ENCODE measurements at regions of chr2 and their contacts with region 1.

Region 1: GRCh38 chr2:230202430-230203109 is 17.2 kb downstream of the SP110 start:
- DNase-seq: peak; percentile 39
- ATAC-seq: peak; percentile 70
- H3K4me3 Mint-ChIP-seq: peak overlapping the region; percentile 76
- H3K27ac Mint-ChIP-seq: peak overlapping the region; percentile 87
- H3K4me1 Mint-ChIP-seq: peaks cover 42% of the 10 kb centered on the region
- H3K27me3 Mint-ChIP-seq: no peaks in the 10 kb centered on the region
- CTCF ChIP-seq: no peak

Region 2: DNA sequence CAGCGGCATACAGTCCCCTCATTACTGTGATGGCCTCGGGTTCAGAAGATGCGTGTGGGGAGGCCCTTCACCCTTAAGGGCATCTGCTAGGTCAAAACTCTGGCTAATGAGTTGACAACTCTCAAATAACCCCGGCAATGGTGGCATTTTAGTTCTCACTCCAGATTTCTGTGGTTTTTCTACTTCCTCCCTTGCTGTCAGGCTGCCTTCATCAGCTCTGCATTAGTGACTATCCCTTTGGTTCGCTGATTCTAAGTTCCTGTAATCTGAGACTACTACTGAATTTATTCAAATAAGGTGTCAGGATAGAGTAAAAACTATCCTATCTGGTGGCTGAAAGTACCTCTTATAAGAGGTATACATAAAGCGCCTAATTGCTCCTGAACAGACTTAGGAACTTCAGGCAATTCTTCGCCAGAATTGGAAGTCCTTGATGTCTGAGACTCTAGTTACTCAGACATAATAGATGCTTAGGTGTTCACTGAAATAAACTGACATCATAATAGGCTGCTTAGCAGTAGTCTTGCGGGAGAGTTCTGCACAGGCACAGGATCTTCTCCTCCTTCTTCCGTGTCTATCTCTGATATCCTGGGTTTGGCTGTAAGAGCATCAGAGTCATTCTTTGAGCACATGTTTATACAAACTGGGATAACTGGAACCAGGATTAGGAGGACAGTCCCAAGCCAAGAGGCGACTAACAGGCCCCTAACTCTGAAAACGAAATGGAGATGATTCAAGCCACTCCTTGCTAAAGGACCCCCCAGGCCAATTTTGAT is 682.7 kb before region 1 on chr2:
- CTCF ChIA-PET with region 1: no interaction called
- POLR2A ChIA-PET with region 1: no interaction called
- intact Hi-C with region 1: no loop called
- DNase-seq: no peak
- ATAC-seq: no peak
- H3K4me3 Mint-ChIP-seq: no peak overlapping the region
- H3K27ac Mint-ChIP-seq: no peak overlapping the region
- H3K4me1 Mint-ChIP-seq: no peaks in the 10 kb centered on the region
- H3K27me3 Mint-ChIP-seq: no peaks in the 10 kb centered on the region
- CTCF ChIP-seq: no peak

Region 3: GRCh38 chr2:230018153-230018552 is 184.4 kb before region 1 on chr2:
- CTCF ChIA-PET with region 1: no interaction called
- POLR2A ChIA-PET with region 1: no interaction called
- intact Hi-C with region 1: no loop called
- DNase-seq: no peak
- ATAC-seq: no peak
- H3K4me3 Mint-ChIP-seq: no peak overlapping the region
- H3K27ac Mint-ChIP-seq: no peak overlapping the region
- H3K4me1 Mint-ChIP-seq: no peaks in the 10 kb centered on the region
- H3K27me3 Mint-ChIP-seq: no peaks in the 10 kb centered on the region
- CTCF ChIP-seq: no peak

Region 4: GRCh38 chr2:230219419-230220331 is 17.1 kb after region 1 on chr2 and contains the start of gene SP110:
- CTCF ChIA-PET with region 1: interaction called, 17 read pairs
- POLR2A ChIA-PET with region 1: interaction called, 268 read pairs
- intact Hi-C with region 1: loop called (anchors 1 kb)
- DNase-seq: peak; percentile 61
- ATAC-seq: peak; percentile 73
- H3K4me3 Mint-ChIP-seq: peak within 1 kb of the TSS; percentile 96
- H3K27ac Mint-ChIP-seq: peak within 1 kb of the TSS; percentile 97
- H3K4me1 Mint-ChIP-seq: peaks cover 90% of the 10 kb centered on the region
- H3K27me3 Mint-ChIP-seq: no peaks in the 10 kb centered on the region
- CTCF ChIP-seq: no peak
- total RNA-seq, gene SP110: 139 and 147 TPM in 2 replicates

Region 5: DNA sequence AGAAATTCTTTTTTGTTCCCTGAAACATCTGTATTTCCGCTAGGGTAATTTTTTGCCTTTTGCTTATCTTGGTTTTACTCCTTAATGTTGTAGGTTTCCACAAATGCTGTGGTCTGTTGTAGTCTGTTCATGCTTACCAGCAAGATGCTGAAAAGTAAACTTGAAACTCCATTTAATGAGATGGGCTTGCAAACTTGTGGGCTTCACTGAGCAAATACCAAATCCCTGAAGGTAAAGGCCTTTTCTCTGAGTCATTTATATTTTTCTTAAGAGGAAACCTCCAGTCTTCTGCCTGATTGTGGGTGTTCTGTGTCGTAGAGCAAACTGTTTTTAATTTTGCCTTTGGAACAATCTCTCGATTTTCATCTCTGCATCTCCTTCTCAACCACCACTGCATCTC is 32.3 kb after region 1 on chr2:
- CTCF ChIA-PET with region 1: interaction called, 10 read pairs
- POLR2A ChIA-PET with region 1: interaction called, 268 read pairs
- intact Hi-C with region 1: loop called (anchors 1 kb)
- DNase-seq: no peak
- ATAC-seq: peak; percentile 56
- H3K4me3 Mint-ChIP-seq: peak overlapping the region; percentile 66
- H3K27ac Mint-ChIP-seq: peak overlapping the region; percentile 84
- H3K4me1 Mint-ChIP-seq: peaks cover 64% of the 10 kb centered on the region
- H3K27me3 Mint-ChIP-seq: no peaks in the 10 kb centered on the region
- CTCF ChIP-seq: no peak

Region 6: DNA sequence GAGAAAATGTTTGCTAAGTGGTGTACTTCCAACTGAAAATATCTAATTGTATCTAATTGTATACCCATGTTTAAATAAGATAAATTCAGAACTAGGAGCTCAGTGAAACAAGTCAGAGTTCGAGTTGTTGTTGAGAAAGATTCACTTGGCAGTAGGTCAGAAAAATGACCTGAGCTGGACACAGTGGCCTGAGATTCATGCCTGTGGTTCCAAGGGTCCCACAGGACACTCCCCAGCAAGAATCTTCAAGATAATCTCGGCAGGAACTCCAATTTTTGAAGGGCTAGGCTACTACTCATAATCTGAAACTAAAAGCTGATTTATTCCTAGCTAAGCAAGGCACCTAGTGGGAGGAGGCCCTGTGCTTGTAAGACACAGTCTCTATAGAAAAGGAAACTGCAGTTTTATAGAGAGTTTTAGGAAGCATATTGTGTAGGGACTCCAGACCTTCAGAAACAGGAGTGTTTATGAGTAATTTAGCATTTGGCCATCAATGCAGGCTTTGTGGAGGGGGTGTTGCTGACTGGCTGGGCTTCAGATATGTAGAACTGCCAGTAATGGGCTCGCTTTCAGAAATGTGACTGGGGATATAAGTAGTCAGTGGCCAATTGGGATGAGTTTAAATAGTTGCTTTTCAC is 66.2 kb after region 1 on chr2:
- CTCF ChIA-PET with region 1: interaction called, 9 read pairs
- POLR2A ChIA-PET with region 1: interaction called, 42 read pairs
- intact Hi-C with region 1: loop called (anchors 1 kb)
- DNase-seq: no peak
- ATAC-seq: no peak
- H3K4me3 Mint-ChIP-seq: peak overlapping the region; percentile 60
- H3K27ac Mint-ChIP-seq: peak overlapping the region; percentile 92
- H3K4me1 Mint-ChIP-seq: peaks cover 81% of the 10 kb centered on the region
- H3K27me3 Mint-ChIP-seq: no peaks in the 10 kb centered on the region
- CTCF ChIP-seq: no peak

Region 7: GRCh38 chr2:230326453-230327417 is 124.2 kb after region 1 on chr2 and contains the start of gene SP140L:
- CTCF ChIA-PET with region 1: interaction called, 6 read pairs
- POLR2A ChIA-PET with region 1: interaction called, 10 read pairs
- intact Hi-C with region 1: no loop called
- DNase-seq: peak; percentile 60
- ATAC-seq: peak; percentile 95
- H3K4me3 Mint-ChIP-seq: peak within 1 kb of the TSS; percentile 96
- H3K27ac Mint-ChIP-seq: peak within 1 kb of the TSS; percentile 99
- H3K4me1 Mint-ChIP-seq: peaks cover 79% of the 10 kb centered on the region
- H3K27me3 Mint-ChIP-seq: no peaks in the 10 kb centered on the region
- CTCF ChIP-seq: no peak
- total RNA-seq, gene SP140L: 106 and 112 TPM in 2 replicates

Region 8: GRCh38 chr2:230472621-230473018 is 270.1 kb after region 1 on chr2:
- CTCF ChIA-PET with region 1: interaction called, 4 read pairs
- POLR2A ChIA-PET with region 1: no interaction called
- intact Hi-C with region 1: loop called (anchors 2 kb)
- DNase-seq: no peak
- ATAC-seq: peak; percentile 75
- H3K4me3 Mint-ChIP-seq: peak overlapping the region; percentile 17
- H3K27ac Mint-ChIP-seq: peak overlapping the region; percentile 89
- H3K4me1 Mint-ChIP-seq: peaks cover 56% of the 10 kb centered on the region
- H3K27me3 Mint-ChIP-seq: no peaks in the 10 kb centered on the region
- CTCF ChIP-seq: no peak